ENCODE measurements at regions of chr6 and their contacts with region 1.

Region 1: GRCh38 chr6:24581084-24581669 is 64.8 kb downstream of the KIAA0319 start:
- DNase-seq: peak; percentile 68 to 78 (median 72)
- ATAC-seq: peak; percentile 90 to 92 (median 92)
- H3K4me3 ChIP-seq: no peak overlapping the region
- H3K27ac ChIP-seq: no peak overlapping the region
- H3K4me1 ChIP-seq: peaks cover 0 to 4% (median 0%) of the 10 kb centered on the region in 4 donors
- H3K27me3 ChIP-seq: no peaks in the 10 kb centered on the region
- CTCF ChIP-seq: peak; percentile 67 to 88 (median 80)
- POLR2A ChIP-seq: no peak

Region 2: GRCh38 chr6:24658573-24659511 is 77.7 kb after region 1 on chr6:
- intact Hi-C with region 1: no loop called
- DNase-seq: no peak
- ATAC-seq: peak; percentile 26 to 68 (median 60)
- H3K4me3 ChIP-seq: no peak overlapping the region
- H3K27ac ChIP-seq: peak overlapping the region in 1 of 3 donors; percentile 30
- H3K4me1 ChIP-seq: peaks cover 0 to 11% (median 5%) of the 10 kb centered on the region in 4 donors
- H3K27me3 ChIP-seq: no peaks in the 10 kb centered on the region
- CTCF ChIP-seq: no peak
- POLR2A ChIP-seq: no peak

Region 3: DNA sequence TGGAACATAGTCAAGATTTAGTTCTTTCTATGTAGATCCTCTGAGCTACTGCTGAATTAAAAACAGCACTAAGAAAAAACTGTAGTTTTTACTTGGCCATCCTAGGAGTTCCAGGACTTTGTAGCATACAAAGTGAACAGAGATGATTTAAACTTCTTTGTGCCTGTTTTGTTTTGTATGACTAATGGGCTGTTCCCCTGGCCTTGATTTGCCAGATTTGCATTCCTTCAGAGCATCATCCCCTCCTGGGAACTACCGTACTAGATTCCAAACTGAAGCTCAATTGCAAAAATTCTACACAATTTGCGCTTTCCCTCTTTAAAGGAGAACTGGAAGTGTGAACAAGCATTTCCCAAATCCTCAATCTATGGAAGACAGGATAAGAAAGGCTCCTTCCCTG is 108.8 kb after region 1 on chr6:
- intact Hi-C with region 1: loop called (anchors 5 to 10 kb)
- DNase-seq: no peak
- ATAC-seq: no peak
- H3K4me3 ChIP-seq: no peak overlapping the region
- H3K27ac ChIP-seq: peak overlapping the region in 1 of 3 donors; percentile 16
- H3K4me1 ChIP-seq: peaks cover 0 to 16% (median 8%) of the 10 kb centered on the region in 4 donors
- H3K27me3 ChIP-seq: no peaks in the 10 kb centered on the region
- CTCF ChIP-seq: no peak
- POLR2A ChIP-seq: no peak

Region 4: DNA sequence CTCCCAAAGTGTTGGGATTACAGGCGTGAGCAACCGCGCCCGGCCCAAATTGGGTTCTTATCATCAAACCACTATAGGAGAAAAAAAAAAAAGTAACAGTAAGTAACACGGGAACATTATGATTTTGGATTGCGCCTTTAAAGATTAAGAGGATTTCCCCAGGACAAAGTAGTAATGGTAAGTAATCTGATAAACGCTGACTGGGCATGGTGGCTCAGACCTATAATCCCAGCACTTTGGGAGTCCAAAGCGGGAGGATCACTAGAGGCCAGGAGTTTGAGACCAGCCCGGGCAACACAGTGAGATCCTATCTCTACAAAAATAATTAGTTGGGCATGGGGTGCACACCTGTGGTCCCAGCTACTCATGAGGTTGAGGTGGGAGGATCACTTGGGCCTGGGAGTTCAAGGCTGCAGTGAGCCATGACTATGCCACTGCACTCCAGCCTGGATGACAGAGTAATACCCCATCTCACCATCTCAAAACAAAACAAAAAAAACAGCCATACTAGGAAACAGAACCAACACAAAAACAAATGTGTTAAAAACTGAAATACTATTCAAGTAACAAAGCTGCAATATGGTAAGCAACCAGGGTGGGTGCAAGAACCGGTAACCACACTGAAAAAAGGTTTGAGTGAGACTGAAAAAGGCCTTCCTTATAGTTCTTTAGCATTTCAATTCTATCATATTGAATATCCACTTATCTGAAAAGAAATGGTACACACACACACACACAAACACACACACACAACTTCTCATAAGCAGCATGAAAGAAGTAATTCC is 129.5 kb after region 1 on chr6:
- intact Hi-C with region 1: no loop called
- DNase-seq: no peak
- ATAC-seq: no peak
- H3K4me3 ChIP-seq: no peak overlapping the region
- H3K27ac ChIP-seq: no peak overlapping the region
- H3K4me1 ChIP-seq: peaks cover 0 to 23% (median 4%) of the 10 kb centered on the region in 4 donors
- H3K27me3 ChIP-seq: no peaks in the 10 kb centered on the region
- CTCF ChIP-seq: no peak
- POLR2A ChIP-seq: no peak

Region 5: GRCh38 chr6:24766680-24767462 is 185.7 kb after region 1 on chr6:
- intact Hi-C with region 1: loop called in 1 of 2 experiments (anchors 10 kb)
- DNase-seq: no peak
- ATAC-seq: peak; percentile 74 to 90 (median 81)
- H3K4me3 ChIP-seq: no peak overlapping the region
- H3K27ac ChIP-seq: no peak overlapping the region
- H3K4me1 ChIP-seq: peaks cover 0 to 4% (median 0%) of the 10 kb centered on the region in 4 donors
- H3K27me3 ChIP-seq: no peaks in the 10 kb centered on the region
- CTCF ChIP-seq: peak; percentile 51 to 57 (median 54)
- POLR2A ChIP-seq: no peak

Region 6: DNA sequence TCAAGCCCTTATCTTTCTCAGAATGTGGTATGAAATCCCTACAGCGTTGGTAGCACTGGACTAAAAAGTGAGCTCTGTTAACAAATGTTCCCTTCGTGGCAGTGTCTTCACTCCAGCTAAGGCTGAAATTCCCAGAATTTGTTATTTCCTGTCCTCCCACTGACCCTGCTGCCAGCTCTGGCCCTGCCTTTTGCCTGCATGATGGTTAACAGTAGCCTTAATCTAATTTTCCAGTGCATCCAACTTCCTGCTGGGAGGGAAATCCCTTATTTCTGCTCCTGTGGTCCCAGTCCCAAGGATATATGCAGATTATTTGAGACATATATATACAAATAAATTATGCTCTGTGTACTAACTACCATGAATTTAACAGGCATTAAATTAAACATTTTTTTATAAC is 540.8 kb after region 1 on chr6:
- intact Hi-C with region 1: no loop called
- DNase-seq: peak in 1 of 3 donors; percentile 25
- ATAC-seq: peak; percentile 60 to 81 (median 78)
- H3K4me3 ChIP-seq: no peak overlapping the region
- H3K27ac ChIP-seq: peak overlapping the region in 2 of 3 donors; percentile 14 to 19
- H3K4me1 ChIP-seq: peaks cover 0 to 18% (median 4%) of the 10 kb centered on the region in 4 donors
- H3K27me3 ChIP-seq: no peaks in the 10 kb centered on the region
- CTCF ChIP-seq: no peak
- POLR2A ChIP-seq: no peak

Measured in right lobe of liver (tissue), 6 donors.